ENCODE measurements at regions of chrX and their contacts with region 1.

Region 1: DNA sequence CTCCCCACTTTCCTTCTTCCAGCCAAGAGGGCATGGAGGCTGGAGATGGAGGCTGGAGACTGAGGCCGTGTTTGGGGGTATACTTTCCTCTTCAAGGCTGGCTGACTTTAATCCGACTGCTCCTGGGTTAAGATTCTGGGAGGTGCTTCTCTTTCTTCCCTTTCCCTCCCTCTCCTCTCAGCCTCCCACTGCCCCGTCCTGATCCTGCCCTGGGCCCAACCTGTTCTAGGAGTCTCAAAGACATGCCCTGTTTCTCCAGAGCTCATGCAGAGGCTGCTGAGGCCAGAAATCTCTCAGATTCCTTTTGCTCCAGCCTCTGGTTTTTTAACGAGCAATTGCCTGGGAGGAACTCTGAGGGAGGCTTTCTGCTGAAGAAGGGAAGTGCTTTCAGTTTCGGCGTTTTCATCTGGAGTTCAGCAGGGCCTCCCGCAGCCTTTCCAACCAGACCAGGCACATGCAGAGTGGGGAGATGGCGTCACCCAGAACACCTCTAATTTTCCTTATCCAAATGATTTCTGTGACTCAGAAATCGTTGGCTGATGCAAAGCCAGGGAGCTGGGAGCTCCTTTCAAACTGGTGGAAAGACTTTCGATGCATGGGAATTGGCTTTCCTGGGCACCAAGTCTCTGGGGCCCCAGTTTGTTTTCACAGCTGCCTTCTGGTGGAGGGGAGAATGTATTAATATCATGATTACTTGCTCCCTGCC is 34.5 kb upstream of the FAM9C start:
- DNase-seq: no peak
- H3K4me3 Mint-ChIP-seq: peak overlapping the region; percentile 61
- H3K27ac Mint-ChIP-seq: peak overlapping the region; percentile 78
- H3K4me1 Mint-ChIP-seq: peaks cover 90% of the 10 kb centered on the region
- H3K27me3 Mint-ChIP-seq: no peaks in the 10 kb centered on the region

Region 2: GRCh38 chrX:12955882-12956703 is 122.8 kb before region 1 on chrX:
- CTCF ChIA-PET with region 1: interaction called, 273 read pairs
- POLR2A ChIA-PET with region 1: interaction called, 17 read pairs
- DNase-seq: peak; percentile 71
- H3K4me3 Mint-ChIP-seq: peak overlapping the region; percentile 80
- H3K27ac Mint-ChIP-seq: peak overlapping the region; percentile 99
- H3K4me1 Mint-ChIP-seq: peaks cover 72% of the 10 kb centered on the region
- H3K27me3 Mint-ChIP-seq: no peaks in the 10 kb centered on the region

Region 3: DNA sequence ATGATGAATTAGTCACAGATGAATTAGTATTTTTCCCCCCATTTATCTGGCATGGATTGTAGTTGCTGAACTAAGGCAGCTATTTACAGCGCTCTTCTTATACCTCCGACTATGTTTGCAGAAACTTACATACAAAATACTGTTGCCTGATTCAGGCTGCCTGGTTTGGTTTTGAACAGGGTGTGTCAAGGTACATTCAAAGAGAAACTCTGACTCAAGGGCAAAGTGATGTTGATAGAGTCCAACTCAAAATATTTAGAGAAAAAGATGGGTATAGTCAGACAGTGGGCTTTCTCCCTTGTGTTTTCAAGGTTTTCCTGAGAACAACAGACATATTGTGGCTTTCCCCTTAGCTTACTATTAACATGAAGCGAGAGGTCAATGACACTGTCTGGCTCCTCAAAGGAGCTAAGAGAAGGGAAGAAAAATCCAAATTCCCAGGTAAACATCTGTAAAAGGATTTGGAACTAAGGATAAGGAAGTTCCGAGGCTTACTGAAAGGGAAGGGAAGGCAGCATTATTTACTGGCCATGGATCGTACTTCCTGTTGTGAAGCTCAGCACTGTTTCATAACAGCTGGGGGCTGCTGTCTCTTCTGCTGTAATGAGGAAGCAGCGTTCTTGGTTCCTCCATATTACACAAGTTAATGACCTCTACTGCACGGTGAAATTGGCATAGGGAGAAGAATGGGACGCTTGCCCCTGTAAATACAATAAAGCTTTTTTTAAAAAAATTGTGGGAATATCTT is 65.4 kb before region 1 on chrX:
- CTCF ChIA-PET with region 1: no interaction called
- POLR2A ChIA-PET with region 1: interaction called, 380 read pairs
- DNase-seq: no peak
- H3K4me3 Mint-ChIP-seq: peak overlapping the region; percentile 6
- H3K27ac Mint-ChIP-seq: peak overlapping the region; percentile 84
- H3K4me1 Mint-ChIP-seq: peaks cover 66% of the 10 kb centered on the region
- H3K27me3 Mint-ChIP-seq: no peaks in the 10 kb centered on the region

Region 4: DNA sequence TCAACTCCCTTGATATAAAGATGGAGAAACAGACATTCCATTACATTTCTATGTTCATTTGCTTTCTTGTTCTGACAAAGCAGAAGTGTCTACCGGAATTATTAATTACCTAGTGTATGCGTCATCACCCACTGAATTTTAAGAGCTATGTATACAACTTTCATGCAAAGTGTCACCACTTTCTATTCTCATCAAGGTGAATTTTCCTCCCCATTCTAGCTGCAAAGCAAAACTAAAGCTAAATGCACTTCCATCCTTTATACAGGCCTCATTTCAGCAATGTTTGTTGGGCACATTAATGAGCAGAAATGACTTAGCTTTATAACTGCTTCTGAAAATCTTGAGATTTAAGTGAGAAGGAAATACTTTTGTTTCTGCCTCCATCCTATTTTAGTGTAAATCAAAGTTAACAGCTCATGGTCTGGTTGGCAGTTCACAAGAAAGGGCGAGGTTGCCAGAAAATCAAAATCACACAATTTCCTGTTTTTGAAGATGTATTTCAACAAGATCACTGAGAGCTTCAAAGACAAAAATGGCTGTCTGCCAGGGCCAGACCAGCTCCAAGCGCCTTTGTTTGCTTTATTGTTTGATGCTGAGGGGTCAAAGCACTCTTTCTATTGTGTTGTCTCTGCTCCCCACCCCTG is 27.2 kb before region 1 on chrX:
- CTCF ChIA-PET with region 1: interaction called, 5 read pairs
- POLR2A ChIA-PET with region 1: interaction called, 25 read pairs
- DNase-seq: peak; percentile 20
- H3K4me3 Mint-ChIP-seq: no peak overlapping the region
- H3K27ac Mint-ChIP-seq: peak overlapping the region; percentile 92
- H3K4me1 Mint-ChIP-seq: peaks cover 65% of the 10 kb centered on the region
- H3K27me3 Mint-ChIP-seq: no peaks in the 10 kb centered on the region

Measured in activated CD4-positive, alpha-beta memory T cell treated with anti-CD3 and anti-CD28 coated beads, Interleukin-2, amount 10 ng/mL, durations not matched to agents 7 days and 5 days (primary cell).